Heart left ventricle (tissue), 16 donors: ENCODE measurements at regions of chr2 and their contacts with region 1.

Region 1: DNA sequence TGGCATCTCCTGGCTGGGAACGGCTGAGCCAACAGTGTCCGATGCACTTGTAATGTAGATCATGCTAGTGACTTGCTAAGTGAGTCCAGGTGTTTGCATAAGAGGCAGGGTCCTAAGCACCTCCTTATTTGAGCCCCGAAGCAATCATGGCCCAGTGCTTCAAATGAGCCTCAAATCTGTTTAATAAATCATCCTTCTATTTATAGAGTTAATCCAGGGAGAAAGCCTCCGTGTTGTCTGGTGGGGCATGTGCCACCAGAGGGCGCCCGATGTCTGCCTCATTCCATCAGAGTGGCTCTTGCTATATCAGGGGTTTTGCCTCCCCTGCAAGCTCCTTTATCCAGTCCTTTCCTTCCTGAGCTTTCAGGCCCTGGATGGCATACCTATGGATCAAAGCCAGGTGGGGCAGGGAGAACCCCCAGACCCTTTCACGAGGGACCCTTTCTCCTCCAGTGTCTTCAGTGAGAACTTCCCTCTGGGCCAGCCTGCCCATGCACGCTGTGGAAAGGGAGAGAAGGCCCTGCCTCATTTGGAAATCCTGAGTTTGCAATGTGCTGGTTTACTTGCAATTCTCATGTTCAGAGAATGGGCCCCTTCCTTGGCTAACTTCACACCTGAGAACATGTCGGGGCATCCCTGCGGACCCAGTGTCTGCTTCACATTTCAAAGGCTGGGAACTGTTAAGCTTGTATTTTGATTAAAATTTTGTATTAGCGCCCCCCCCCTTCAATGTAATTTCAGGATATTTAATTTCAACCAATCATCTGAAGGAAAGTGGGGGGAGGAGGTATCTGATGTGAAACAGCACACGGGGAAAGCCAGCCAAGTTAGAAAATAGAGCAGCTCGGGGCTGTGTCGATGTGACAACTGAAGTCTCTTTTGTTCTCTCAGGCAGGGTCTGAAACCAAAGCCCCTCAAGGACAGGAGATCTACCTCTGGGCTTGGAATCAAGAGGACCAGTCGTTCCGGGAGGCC is 39.7 kb downstream of the RDH14 start:
- DNase-seq: peak; percentile 80 to 90 (median 82)
- ATAC-seq: peak; percentile 82 to 89 (median 85)
- H3K4me3 ChIP-seq: peak overlapping the region in 7 of 12 donors; percentile 6 to 39 (median 31)
- H3K27ac ChIP-seq: peak overlapping the region; percentile 25 to 79 (median 62)
- H3K4me1 ChIP-seq: peaks cover 0 to 36% (median 15%) of the 10 kb centered on the region in 12 donors
- H3K27me3 ChIP-seq: no peaks in the 10 kb centered on the region
- CTCF ChIP-seq: peak; percentile 75 to 97 (median 92)
- POLR2A ChIP-seq: no peak

Region 2: DNA sequence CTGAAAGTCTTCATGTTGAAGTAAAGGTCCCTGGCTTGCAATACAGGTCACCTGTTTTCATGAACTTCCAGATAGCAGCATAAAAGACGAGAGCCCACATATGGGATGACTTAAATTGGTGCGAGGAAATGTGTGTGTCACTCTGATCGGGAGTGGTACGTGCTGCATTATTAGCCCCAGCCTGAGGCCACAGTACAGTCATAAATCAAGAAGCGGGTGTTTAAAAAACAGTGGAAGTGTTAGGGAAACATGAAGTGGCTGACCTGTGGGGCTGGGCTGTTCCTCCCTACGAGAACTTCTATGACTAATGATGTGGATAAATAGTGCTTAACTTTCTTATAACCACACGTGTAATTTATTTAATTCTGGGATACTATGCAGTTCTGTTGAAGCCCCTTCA is 15.4 kb after region 1 on chr2:
- intact Hi-C with region 1: no loop called
- DNase-seq: no peak
- ATAC-seq: no peak
- H3K4me3 ChIP-seq: no peak overlapping the region
- H3K27ac ChIP-seq: no peak overlapping the region
- H3K4me1 ChIP-seq: no peaks in the 10 kb centered on the region
- H3K27me3 ChIP-seq: no peaks in the 10 kb centered on the region
- CTCF ChIP-seq: no peak
- POLR2A ChIP-seq: no peak

Region 3: DNA sequence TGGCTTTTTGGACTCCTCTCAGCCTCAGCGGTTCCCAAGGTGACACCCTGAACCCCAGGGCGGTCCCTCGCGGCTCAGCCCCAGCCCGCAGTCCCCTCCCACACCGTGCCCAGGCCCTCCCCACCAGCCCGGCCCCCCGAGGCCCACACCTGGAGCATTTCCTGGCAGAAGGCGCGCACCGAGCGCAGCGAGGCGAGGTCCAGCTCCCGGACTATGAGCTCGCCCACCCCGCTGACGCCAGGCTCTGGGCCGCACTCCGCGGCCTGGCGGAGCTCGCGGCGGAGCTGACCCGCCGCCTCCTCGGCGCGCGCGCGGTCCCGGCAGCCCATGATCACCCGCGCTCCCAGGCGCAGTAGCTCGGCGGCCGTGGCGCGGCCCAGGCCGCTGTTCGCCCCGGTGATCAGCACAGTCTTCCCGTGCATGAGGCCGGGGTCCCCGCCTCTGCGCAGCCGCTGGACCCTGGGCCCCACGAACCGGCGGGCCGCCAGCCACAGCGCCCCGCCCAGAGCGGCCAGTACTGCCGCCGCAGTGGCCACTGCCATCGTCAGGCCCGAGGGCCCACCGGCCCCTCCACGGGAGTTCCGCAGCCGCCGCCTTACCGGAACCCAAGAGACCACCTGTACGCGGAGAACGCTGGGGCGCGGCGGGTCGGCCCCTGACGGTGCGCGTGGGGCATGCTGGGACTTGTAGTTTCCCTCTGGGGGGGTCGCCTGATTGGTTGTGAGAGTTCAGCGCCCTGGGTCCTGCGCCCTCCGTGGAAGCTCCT is 39.5 kb after region 1 on chr2 and contains the start of gene RDH14:
- intact Hi-C with region 1: loop called in 5 of 10 experiments (anchors 2 to 5 kb)
- DNase-seq: peak; percentile 95 to 97 (median 96)
- ATAC-seq: peak; percentile 97 to 98 (median 98)
- H3K4me3 ChIP-seq: peak within 1 kb of the TSS; percentile 66 to 93 (median 86)
- H3K27ac ChIP-seq: peak within 1 kb of the TSS; percentile 96 to 99 (median 98)
- H3K4me1 ChIP-seq: peaks cover 7 to 47% (median 26%) of the 10 kb centered on the region in 12 donors
- H3K27me3 ChIP-seq: no peaks in the 10 kb centered on the region
- CTCF ChIP-seq: peak in 3 of 12 donors; percentile 18 to 26 (median 18)
- POLR2A ChIP-seq: peak; percentile 3 to 81
- total RNA-seq, gene RDH14: 40.0 to 70.7 (median 49.0) TPM

Region 4: GRCh38 chr2:18741895-18742732 is 221.4 kb after region 1 on chr2:
- intact Hi-C with region 1: loop called (anchors 1 to 5 kb)
- DNase-seq: peak; percentile 24 to 61 (median 57)
- ATAC-seq: peak; percentile 57 to 78 (median 74)
- H3K4me3 ChIP-seq: no peak overlapping the region
- H3K27ac ChIP-seq: peak overlapping the region in 6 of 12 donors; percentile 0 to 54 (median 34)
- H3K4me1 ChIP-seq: peaks cover 0 to 29% (median 3%) of the 10 kb centered on the region in 12 donors
- H3K27me3 ChIP-seq: no peaks in the 10 kb centered on the region
- CTCF ChIP-seq: peak in 8 of 12 donors; percentile 7 to 48 (median 37)
- POLR2A ChIP-seq: no peak

Region 5: DNA sequence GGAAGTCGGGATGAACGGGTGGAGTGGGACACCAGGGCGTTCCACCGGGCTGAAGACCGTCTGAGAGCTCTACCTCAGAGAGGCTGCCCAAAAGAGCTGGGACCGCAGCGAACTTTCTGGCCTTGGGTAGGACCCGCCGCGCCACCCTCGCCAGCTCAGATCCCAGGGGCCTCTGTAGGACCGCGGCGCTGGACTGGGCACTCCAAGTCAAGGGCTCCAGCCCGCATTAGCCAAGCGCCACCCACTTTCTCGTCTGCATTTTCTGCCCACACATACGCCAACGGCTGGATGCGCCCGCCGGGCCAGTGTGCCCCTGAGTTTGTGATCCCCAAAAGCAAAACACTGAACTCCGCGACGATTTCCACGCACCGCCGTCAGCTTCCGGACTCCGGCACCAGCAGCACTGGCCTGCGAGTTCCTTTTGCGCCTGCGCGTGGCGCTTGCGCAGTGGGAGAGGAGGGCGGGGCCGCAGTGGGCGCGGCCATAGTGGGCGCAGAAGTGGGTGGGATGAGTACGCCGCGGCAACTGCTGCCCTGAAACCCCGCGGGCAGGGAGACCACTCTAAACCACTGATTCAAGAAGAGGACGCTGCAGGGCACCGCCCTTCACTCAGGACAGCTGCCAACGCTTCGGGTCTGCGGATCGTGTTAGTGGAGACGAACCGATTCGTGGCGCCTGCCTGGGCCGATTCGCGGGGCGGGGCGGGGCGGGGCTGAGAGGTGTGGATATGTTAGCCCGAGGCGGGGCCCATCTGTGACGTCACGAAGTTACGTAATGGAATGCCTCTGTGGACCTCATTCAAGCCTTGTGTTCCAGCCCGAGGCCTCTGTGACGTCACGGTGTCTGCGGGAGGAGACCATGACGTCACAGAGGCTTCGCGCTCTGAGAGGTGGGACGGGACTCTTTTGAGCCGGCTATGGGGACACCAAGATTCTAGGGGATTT is 827.2 kb after region 1 on chr2:
- intact Hi-C with region 1: loop called in 1 of 10 experiments (anchors 5 kb)
- DNase-seq: peak; percentile 91 to 96 (median 95)
- ATAC-seq: peak; percentile 96 to 98 (median 98)
- H3K4me3 ChIP-seq: peak overlapping the region; percentile 62 to 96 (median 81)
- H3K27ac ChIP-seq: peak overlapping the region; percentile 78 to 99 (median 94)
- H3K4me1 ChIP-seq: peaks cover 0 to 31% (median 14%) of the 10 kb centered on the region in 12 donors
- H3K27me3 ChIP-seq: peaks cover 0 to 34% (median 7%) of the 10 kb centered on the region in 9 donors
- CTCF ChIP-seq: no peak
- POLR2A ChIP-seq: peak; percentile 64 to 96